Mammary epithelial cell (primary cell): ENCODE measurements at regions of chr17 and their contacts with region 1.

Region 1: DNA sequence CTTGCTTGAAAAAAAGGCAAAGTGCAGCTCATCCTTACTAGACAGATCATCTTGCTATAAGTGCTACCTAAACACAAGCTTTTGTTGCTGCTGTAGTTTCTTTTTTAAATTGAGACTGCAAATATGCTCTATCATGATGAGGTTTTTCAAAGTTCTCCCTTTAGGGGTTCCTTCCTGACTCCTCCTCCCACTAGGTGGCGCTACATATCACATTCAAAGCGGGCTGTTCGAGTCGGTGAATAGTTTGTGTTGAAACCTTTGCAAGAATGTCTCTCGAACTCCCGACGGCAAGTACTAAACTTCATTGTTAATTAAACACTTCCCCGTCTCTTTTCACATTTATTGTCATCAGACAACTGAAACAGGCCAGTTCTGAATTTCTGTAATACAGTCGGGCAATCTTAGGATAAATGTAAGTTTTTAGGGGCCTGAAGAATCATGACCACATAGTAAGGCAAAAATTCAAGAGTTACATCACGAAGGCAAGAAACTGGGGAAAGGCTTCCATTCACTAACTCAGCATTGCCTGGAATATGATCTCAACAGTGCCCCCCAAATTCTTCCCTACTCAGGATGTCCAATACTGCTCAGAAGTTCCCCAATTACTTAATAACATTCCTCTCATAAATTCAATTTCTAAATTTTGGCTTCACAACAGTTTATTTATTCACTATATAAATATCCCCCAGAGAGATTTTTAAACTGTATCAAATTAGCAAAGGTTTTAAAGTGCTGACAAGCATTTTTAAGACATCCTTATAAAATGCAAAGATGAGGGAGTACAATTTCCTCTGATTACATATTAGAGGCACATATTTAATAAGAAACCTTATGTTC is 6.7 kb downstream of the HS3ST3A1 start:
- DNase-seq: peak; percentile 62
- H3K4me3 ChIP-seq: no peak overlapping the region
- H3K27ac ChIP-seq: no peak overlapping the region
- H3K4me1 ChIP-seq: peaks cover 3% of the 10 kb centered on the region
- H3K27me3 ChIP-seq: no peaks in the 10 kb centered on the region
- CTCF ChIP-seq: peak; percentile 88 to 91

Region 2: DNA sequence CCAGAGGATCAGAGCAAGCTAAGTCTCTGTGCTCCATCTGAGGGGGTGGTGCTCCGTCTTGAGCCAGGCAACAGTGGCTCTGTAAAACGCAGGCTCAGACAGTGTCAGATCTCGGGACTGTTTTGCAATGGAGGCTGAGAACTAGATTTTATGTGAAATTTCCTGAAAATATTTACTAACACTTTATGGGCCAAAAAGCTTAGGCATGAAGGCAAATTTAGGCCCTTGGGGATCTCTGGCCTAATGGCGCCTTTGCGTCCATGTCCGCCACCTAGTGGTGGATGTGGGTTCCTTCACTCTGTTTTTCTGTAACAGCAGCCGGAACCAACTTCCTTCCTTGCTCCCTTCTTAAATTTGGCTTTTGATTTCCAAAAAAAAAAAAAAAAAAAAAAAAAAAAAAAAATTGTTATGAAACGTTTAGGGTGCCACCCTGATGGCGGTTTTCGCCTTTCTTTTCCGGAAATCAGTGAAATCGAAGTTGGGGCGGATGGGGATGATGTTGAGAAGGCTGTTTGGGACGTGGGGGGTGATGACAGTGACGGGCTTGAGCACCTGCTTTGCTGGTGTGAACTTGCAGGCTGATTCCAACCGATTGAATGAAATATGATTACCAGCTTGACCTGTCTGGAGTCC is 563.1 kb before region 1 on chr17:
- CTCF ChIA-PET with region 1: no interaction called
- dilution Hi-C with region 1: no loop called
- in situ Hi-C with region 1: no loop called
- intact Hi-C with region 1: loop called (anchors 2 kb)
- DNase-seq: peak; percentile 14
- H3K4me3 ChIP-seq: no peak overlapping the region
- H3K27ac ChIP-seq: no peak overlapping the region
- H3K4me1 ChIP-seq: no peaks in the 10 kb centered on the region
- H3K27me3 ChIP-seq: peaks cover 2% of the 10 kb centered on the region
- CTCF ChIP-seq: peak; percentile 85 to 89

Region 3: DNA sequence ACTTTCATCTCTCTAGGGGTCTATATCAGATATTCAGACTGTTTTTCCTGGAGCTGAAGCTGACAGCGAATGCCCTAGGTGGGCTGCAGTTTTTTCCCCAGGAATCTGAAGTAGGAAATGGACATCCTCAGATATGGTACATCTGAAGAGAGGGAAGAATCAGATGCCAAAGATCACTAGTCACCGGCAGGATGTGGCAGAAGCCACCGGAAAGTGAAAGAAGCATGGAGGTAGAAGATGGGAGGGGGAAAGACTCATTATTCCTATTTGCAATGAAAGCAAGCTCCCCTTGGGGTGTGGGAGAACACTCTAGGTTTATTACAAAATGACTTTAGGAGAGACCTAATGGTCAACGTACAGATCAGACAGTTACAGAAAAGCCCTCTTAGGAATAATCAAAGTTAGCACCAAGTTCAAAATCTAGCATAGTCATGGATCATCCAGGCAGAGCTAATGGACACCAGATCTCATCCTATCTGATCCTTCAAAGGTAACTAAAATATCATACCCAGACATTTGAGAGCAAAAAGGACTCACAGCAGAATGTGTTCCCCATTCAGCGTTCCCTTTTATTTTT is 104.0 kb before region 1 on chr17:
- CTCF ChIA-PET with region 1: no interaction called
- dilution Hi-C with region 1: no loop called
- in situ Hi-C with region 1: no loop called
- intact Hi-C with region 1: no loop called
- DNase-seq: no peak
- H3K4me3 ChIP-seq: no peak overlapping the region
- H3K27ac ChIP-seq: no peak overlapping the region
- H3K4me1 ChIP-seq: no peaks in the 10 kb centered on the region
- H3K27me3 ChIP-seq: no peaks in the 10 kb centered on the region
- CTCF ChIP-seq: no peak

Region 4: DNA sequence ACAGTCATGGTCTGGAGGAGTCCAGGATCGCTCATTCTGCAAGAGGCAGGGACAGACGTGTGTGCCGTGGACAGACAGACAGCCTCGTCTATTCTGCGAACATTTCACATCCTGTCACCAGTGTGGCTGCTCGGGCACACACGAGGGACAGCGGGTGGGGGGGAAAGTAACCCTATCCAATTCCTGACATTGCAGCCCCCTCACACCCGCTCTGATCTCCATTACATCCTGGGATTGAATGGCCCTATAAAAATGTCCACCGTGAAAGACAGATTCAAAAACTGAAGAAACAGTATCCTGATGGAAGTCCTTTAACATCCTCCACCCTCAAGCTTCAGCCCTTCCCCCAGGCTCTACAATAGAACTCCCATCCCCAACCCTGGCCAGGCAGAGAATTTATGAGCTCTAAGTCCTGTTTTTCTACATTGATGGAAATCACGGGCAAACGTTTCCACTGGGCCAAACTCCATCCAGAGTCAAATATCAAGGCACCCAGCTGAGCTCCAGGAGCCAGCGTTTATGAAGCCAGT is 32.6 kb before region 1 on chr17:
- CTCF ChIA-PET with region 1: no interaction called
- dilution Hi-C with region 1: no loop called
- in situ Hi-C with region 1: no loop called
- intact Hi-C with region 1: no loop called
- DNase-seq: peak; percentile 82
- H3K4me3 ChIP-seq: no peak overlapping the region
- H3K27ac ChIP-seq: no peak overlapping the region
- H3K4me1 ChIP-seq: peaks cover 16% of the 10 kb centered on the region
- H3K27me3 ChIP-seq: no peaks in the 10 kb centered on the region
- CTCF ChIP-seq: no peak

Region 5: DNA sequence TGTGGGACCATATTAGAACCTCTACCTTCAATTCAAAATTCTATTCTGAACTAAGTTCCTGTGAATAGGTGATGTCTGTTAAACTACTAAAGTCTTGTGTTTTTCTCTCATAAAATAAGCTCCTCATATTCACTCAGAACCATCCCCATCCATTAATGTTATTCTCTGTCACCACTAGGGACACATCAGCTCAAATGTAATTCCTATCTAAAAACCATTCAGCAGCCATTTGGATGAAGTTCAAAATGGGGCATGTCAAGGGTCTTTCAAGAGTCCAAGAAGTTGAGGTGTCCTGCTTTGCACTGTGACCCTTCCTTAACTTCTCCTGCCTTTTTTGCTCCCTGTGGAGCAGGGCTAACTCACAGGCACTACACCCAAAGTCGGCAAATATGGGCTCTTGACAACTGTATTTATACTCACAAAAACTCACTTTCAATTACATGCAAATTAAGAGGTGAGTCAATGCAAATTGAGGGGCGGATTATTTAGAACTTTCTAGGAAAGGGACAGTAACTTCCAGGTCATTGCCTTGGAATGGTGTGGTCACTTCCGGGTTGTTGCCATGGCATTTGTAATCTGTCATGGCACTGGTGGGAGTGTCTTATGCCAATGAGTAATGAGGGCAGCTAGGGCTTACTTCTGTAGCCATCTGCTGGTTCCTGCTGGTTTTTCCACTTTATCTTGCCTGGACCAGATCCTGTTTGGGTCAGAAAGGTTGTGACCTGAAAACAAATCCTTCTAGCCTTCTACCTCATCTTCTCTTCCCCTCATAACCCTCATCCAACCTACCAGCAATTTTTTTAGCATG is 346.1 kb after region 1 on chr17:
- CTCF ChIA-PET with region 1: no interaction called
- dilution Hi-C with region 1: no loop called
- in situ Hi-C with region 1: no loop called
- intact Hi-C with region 1: loop called (anchors 10 kb)
- DNase-seq: peak; percentile 35
- H3K4me3 ChIP-seq: no peak overlapping the region
- H3K27ac ChIP-seq: no peak overlapping the region
- H3K4me1 ChIP-seq: no peaks in the 10 kb centered on the region
- H3K27me3 ChIP-seq: no peaks in the 10 kb centered on the region
- CTCF ChIP-seq: no peak

Region 6: DNA sequence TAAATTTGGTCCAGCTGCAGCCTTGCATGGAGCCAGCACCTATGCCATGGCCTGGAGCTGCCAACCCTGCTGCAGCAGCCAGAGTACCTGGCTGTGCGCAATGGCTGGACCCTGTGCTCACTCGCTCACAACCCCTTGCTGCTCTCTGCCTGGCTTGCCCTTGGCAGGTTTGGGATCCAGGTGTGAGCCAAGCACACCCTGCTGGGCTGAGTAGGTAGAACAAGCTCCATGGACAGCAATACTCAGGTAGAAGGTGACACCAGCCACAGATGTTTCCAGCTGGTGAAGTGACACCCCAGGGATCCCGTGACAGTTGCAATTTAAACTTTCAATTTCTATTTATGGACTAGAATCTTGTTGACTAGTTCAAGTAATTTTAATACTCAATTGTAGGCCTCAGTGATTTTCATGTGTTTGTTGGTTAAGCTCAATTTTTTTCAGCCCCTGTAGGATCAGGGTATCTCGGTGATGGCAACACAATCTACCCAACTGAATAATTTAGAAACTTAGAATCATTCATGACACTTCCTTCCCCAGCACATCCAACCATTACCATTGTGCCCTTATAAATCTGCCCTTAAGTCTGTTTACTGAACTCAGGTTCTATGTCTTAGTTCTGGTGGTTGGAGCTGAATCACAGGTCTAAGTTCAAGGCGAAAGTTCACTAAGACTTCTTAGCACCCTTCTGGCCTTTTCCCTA is 1190.2 kb after region 1 on chr17:
- CTCF ChIA-PET with region 1: interaction called, 5 read pairs
- dilution Hi-C with region 1: no loop called
- in situ Hi-C with region 1: no loop called
- intact Hi-C with region 1: loop called (anchors 5 kb)
- DNase-seq: peak; percentile 40
- H3K4me3 ChIP-seq: no peak overlapping the region
- H3K27ac ChIP-seq: no peak overlapping the region
- H3K4me1 ChIP-seq: no peaks in the 10 kb centered on the region
- H3K27me3 ChIP-seq: no peaks in the 10 kb centered on the region
- CTCF ChIP-seq: peak; percentile 38 to 67

Region 7: GRCh38 chr17:15171167-15172047 is 1576.4 kb after region 1 on chr17:
- CTCF ChIA-PET with region 1: no interaction called
- dilution Hi-C with region 1: no loop called
- in situ Hi-C with region 1: loop called in 1 of 2 experiments (anchors 25 kb)
- intact Hi-C with region 1: no loop called
- DNase-seq: peak; percentile 47
- H3K4me3 ChIP-seq: no peak overlapping the region
- H3K27ac ChIP-seq: no peak overlapping the region
- H3K4me1 ChIP-seq: no peaks in the 10 kb centered on the region
- H3K27me3 ChIP-seq: peaks cover 2% of the 10 kb centered on the region
- CTCF ChIP-seq: peak; percentile 82 to 86